Activated T-helper 1 cell treated with anti-CD3 and anti-CD28 coated beads, Interleukin-12 subunit alpha, Interleukin-12 subunit beta, Interleukin-2, Interleukin-4 antibody, amounts not matched to agents 30 ng/mL and 10 ng/mL and 1 ng/mL, durations not matched to agents 14 hours and 24 hours and 36 hours (primary cell): ENCODE measurements at regions of chr13 and their contacts with region 1.

Region 1: GRCh38 chr13:40666045-40666904 is at the start of gene FOXO1:
- DNase-seq: peak; percentile 88
- H3K4me3 Mint-ChIP-seq: peak within 1 kb of the TSS; percentile 91
- H3K27ac Mint-ChIP-seq: peak within 1 kb of the TSS; percentile 95
- H3K4me1 Mint-ChIP-seq: peaks cover 45% of the 10 kb centered on the region
- H3K27me3 Mint-ChIP-seq: peaks cover 2% of the 10 kb centered on the region
- total RNA-seq, gene FOXO1: 41.9 and 43.1 TPM in 2 replicates

Region 2: DNA sequence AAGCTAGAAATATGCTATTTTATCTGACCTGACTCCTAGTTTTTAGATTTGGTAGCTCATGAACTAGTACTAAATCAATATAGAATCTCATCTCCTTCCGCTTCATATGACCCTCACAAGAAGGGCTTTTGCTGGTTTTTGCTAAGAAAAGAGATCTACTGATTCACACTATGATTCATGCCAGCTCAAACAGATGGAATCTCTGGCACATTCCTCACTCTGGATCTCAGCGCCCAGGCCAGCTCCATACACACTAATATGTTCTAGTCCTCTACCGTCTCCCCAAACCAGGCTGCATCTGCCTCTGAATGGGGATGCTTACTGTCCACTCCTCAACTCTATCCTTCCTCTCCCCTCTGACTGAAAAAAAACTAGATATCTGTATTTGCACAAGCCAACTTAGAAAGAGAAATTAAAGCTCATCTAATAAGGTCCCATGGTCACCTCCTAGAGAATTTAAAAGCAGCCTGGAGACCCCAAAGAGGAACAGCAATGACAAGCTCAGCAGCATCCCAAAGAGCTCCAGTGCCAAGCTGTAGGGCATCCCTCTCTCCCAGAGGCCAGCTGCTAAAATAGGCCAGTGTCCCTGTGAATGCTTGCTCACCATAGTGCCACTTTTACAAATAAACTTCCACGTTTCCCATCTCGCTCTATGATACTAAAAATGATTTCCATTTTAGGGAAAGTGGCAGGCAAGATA is 1138.2 kb before region 1 on chr13:
- intact Hi-C with region 1: no loop called
- DNase-seq: no peak
- H3K4me3 Mint-ChIP-seq: no peak overlapping the region
- H3K27ac Mint-ChIP-seq: no peak overlapping the region
- H3K4me1 Mint-ChIP-seq: no peaks in the 10 kb centered on the region
- H3K27me3 Mint-ChIP-seq: peaks cover 4% of the 10 kb centered on the region

Region 3: DNA sequence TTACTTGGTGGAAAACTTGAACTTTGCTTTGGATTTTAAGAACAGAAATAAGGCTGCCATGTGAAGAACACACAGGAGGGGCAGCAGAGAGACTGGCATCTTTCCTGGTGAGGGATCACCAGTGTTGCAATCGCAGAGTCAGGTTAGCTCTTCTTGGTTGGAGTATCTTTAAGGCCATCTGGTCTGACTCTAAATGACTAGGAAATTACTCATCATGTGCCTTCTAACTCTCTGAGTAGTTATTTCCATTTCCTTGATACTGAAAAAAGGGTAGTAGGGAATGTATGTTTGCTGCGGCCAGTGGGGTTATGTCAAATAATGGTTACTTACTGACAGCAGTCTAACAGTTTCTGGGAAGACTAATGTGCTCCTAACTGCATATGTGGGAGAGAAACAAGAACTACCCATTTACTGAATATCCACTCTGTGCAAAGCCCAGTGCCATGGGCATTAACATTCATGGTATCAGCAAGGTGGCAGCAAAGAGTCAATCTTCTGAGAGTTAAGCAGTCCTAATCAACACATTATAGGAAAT is 888.7 kb before region 1 on chr13:
- intact Hi-C with region 1: loop called (anchors 1 kb)
- DNase-seq: peak; percentile 16
- H3K4me3 Mint-ChIP-seq: peak overlapping the region; percentile 45
- H3K27ac Mint-ChIP-seq: peak overlapping the region; percentile 91
- H3K4me1 Mint-ChIP-seq: peaks cover 50% of the 10 kb centered on the region
- H3K27me3 Mint-ChIP-seq: no peaks in the 10 kb centered on the region

Region 4: DNA sequence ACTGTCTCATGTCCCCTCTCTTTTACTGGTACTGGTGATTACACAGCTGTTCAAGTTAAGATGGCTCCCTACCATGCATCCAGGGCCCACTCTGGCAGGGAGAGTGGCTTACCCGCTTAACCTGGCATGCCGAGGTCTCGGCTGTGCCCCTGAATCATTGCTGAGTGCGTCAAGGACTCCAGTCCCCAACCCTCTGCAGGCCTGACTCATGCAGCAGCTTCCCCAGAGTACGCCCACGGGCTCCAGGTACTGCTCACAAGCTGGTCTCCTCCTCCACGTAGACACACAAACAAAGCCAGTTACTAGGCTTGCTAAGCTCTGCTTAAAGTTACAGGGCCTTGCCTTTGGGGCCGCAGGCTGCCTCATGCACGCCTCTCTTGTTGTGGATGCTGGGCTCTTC is 563.4 kb before region 1 on chr13:
- intact Hi-C with region 1: loop called (anchors 1 kb)
- DNase-seq: peak; percentile 51
- H3K4me3 Mint-ChIP-seq: peak overlapping the region; percentile 74
- H3K27ac Mint-ChIP-seq: peak overlapping the region; percentile 97
- H3K4me1 Mint-ChIP-seq: peaks cover 64% of the 10 kb centered on the region
- H3K27me3 Mint-ChIP-seq: no peaks in the 10 kb centered on the region

Region 5: GRCh38 chr13:40251343-40252032 is 414.8 kb before region 1 on chr13:
- intact Hi-C with region 1: loop called (anchors 2 kb)
- DNase-seq: peak; percentile 4
- H3K4me3 Mint-ChIP-seq: no peak overlapping the region
- H3K27ac Mint-ChIP-seq: peak overlapping the region; percentile 78
- H3K4me1 Mint-ChIP-seq: peaks cover 39% of the 10 kb centered on the region
- H3K27me3 Mint-ChIP-seq: no peaks in the 10 kb centered on the region

Region 6: DNA sequence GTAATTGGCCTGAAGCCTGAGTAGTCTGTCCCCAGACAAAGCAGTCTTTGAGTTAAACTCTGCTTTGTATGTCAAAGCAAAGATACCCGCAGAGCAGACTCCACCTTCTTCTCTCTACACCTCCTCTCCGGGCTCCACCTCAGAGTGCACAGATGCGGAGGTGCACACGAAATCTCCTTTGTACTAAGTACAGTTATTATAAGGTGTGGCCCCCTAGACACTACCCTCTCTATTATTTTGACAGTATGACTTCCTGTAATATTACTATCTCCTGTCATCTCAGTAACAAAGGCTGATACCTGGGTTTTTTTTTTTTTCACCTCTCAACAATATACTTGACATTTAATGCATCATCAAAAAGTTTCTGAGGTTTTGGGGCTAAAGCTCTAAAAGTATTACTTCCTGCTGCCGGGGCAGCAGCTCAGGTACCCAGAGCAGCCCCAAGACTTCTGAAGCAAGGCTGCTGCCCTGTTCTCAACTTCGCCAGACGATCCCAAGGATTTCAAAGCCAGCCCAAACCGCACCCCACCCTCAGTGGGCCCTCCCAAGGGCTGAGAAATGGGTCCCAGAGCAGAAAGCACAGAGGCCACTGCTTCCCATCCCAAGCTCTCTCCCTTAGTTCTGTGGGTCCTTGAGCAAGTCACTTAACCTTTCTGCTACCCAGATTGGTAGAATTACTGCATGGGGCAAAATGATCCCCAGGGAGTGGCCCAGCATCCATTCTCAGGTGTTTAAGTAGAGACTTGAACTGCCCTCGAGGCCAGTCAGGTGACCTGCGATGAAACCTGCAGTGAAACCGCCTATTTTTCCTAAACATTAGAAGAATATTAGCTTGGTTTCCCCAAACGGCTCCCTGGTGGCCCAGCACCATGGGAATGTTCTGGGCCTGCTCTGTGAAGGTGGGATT is 180.4 kb before region 1 on chr13:
- intact Hi-C with region 1: loop called (anchors 1 kb)
- DNase-seq: peak; percentile 50
- H3K4me3 Mint-ChIP-seq: peak overlapping the region; percentile 23
- H3K27ac Mint-ChIP-seq: peak overlapping the region; percentile 89
- H3K4me1 Mint-ChIP-seq: peaks cover 68% of the 10 kb centered on the region
- H3K27me3 Mint-ChIP-seq: no peaks in the 10 kb centered on the region

Region 7: DNA sequence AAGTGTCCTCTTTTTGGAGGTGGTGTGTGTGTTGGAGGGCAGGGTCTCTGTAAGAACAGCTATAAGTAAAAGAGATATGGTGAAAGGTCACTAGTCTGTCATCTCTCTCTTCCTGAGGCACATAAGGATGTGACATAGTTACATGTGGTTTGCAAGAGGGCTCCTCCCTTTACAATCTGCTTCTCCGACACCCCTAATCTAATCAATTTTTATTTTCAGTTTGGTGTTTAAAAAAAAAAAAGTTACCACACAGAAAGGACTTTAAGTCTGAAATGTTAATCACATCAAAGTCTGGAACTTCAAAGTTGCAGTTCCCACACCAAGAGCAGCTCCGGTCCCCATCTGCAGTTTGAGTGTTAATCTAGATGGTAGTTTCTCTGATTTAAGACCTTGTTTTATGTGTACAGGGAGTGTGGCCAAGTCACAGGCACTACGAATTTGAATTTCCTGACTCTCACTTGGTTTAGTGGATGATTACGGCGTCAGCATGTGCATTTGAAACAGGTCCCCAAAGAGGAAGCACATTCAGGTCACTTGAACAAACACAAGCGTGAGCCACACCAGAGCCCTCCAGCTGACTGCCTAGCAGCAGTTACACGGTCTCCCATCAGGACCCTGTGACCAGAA is 53.0 kb before region 1 on chr13:
- intact Hi-C with region 1: loop called (anchors 2 kb)
- DNase-seq: peak; percentile 45
- H3K4me3 Mint-ChIP-seq: peak overlapping the region; percentile 78
- H3K27ac Mint-ChIP-seq: peak overlapping the region; percentile 91
- H3K4me1 Mint-ChIP-seq: peaks cover 78% of the 10 kb centered on the region
- H3K27me3 Mint-ChIP-seq: no peaks in the 10 kb centered on the region

Region 8: DNA sequence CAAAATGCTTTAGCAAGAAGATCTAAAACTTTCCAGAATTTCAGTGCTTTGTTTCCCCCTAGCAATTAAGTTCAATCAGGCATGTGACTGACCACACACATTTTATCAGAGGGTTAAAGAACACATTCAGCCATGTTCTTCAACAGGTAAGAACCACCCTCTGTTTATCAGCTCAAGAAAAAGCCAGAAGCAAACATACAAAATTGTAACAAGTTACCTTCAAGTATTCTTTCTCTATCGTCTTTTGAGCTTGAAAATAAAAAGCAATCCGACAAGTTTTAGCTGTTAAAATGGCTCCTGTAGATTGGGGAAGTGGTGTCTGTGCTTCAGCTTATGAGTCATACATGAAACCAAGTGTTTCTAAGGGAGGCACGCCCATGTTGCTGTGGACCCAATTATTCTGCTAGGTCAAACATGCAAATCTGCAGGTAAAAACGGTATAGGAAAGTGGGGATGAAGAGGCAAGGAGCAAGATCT is 352.8 kb after region 1 on chr13 and contains the start of gene ELF1:
- intact Hi-C with region 1: loop called (anchors 5 kb)
- DNase-seq: peak; percentile 49
- H3K4me3 Mint-ChIP-seq: peak within 1 kb of the TSS; percentile 91
- H3K27ac Mint-ChIP-seq: peak within 1 kb of the TSS; percentile 97
- H3K4me1 Mint-ChIP-seq: peaks cover 53% of the 10 kb centered on the region
- H3K27me3 Mint-ChIP-seq: no peaks in the 10 kb centered on the region
- total RNA-seq, gene ELF1: 75.3 and 76.8 TPM in 2 replicates